PC-3 (cell line): ENCODE measurements at regions of chr4 and their contacts with region 1.

Region 1: DNA sequence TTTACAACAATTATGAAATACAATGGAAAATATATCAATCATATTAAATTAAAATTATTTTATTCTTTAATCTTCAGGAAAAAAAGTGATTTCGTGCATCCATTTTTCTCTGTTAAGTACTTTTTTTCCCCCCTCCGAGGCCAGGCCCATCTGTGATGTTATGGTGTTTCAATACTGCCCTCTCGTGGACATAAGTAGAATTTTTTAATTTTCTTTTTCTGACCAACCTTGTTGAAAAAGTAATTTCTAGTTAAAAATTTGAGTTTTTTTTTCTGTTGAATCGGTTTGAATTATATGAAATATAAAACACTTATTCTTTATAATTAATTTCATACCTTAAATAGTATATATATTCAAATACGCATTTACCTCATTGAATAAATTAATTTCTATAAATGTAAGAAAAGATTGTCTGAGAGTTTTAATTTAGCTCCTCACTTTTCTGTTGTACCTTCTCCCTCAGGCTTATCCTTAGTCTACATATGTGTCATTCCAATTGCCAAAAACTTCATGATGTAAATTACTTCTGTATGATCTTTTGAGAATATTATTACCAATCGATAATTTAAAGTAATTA is 175.8 kb upstream of the TECRL start:
- DNase-seq: peak; percentile 57
- ATAC-seq: no peak
- H3K4me3 ChIP-seq: no peak overlapping the region
- H3K27ac ChIP-seq: no peak overlapping the region
- H3K4me1 ChIP-seq: no peaks in the 10 kb centered on the region
- H3K27me3 ChIP-seq: no peaks in the 10 kb centered on the region
- CTCF ChIP-seq: peak; percentile 62

Region 2: DNA sequence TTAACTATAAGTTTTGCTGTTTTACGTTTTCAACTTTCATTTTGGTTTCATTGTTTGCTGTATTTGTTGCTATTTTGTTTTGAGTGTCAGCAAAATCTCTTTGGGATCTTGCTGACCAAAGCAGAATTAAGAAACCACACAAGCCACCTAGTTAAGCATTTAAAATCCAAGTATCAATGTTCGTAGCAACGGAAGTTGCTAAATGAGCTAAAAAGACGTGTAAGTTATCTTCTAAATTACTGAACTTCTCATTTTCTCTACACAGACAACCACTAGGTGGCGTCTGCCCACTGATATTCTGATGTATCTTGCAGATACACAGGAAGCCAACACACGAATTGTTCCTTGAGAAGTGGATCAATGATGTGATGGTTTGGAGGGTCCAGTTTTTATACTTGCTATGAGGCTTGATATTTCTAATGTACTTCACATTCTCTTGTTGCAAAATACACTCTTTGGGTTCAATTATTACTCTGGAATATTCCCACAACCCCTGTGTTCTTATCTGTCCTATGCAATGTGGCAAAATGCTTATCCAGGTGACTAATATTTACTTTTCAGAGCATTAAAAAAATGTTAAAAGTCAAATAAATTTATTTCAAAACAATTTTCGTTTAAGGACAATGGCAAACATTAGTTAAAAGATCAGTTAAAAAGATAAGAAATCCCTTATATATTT is 426.3 kb before region 1 on chr4:
- CTCF ChIA-PET with region 1: no interaction called
- POLR2A ChIA-PET with region 1: no interaction called
- intact Hi-C with region 1: loop called (anchors 2 kb)
- DNase-seq: peak; percentile 90
- ATAC-seq: peak; percentile 82
- H3K4me3 ChIP-seq: peak overlapping the region; percentile 61
- H3K27ac ChIP-seq: no peak overlapping the region
- H3K4me1 ChIP-seq: 0 out of 2 replicates have a peak, but pooled peaks cover 4% of the 10 kb centered on the region
- H3K27me3 ChIP-seq: no peaks in the 10 kb centered on the region
- CTCF ChIP-seq: peak; percentile 98

Region 3: GRCh38 chr4:64539234-64539849 is 45.7 kb before region 1 on chr4:
- CTCF ChIA-PET with region 1: no interaction called
- POLR2A ChIA-PET with region 1: no interaction called
- intact Hi-C with region 1: no loop called
- DNase-seq: peak; percentile 75
- ATAC-seq: peak; percentile 86
- H3K4me3 ChIP-seq: no peak overlapping the region
- H3K27ac ChIP-seq: no peak overlapping the region
- H3K4me1 ChIP-seq: no peaks in the 10 kb centered on the region
- H3K27me3 ChIP-seq: no peaks in the 10 kb centered on the region
- CTCF ChIP-seq: peak; percentile 86

Region 4: DNA sequence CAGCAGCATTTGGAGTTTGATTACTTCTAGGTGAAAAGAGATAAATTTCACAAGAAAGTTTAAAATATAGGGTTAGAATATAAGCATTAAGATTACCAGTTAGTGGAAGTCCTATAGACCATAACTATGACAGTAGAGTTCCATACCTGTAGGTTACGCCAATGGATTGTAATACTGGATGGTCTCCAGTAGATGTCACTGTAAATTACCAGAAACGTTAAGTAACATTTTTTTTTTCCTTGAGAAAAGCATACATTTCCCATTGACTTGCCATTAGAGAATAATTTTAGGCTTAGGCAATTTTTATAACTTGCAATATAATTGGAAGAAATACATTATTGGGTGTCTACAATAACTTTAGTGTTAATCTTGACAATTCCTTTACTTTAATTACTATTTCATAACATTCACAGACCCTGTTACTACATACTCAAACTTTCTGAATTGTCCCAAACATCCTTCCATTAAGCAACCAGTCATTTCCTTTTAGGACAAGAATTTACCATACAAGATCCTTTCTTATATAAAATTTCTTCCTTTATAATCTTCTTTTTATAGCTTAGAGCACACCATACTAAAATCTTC is 128.3 kb after region 1 on chr4:
- CTCF ChIA-PET with region 1: no interaction called
- POLR2A ChIA-PET with region 1: no interaction called
- intact Hi-C with region 1: no loop called
- DNase-seq: peak; percentile 81
- ATAC-seq: peak; percentile 52
- H3K4me3 ChIP-seq: no peak overlapping the region
- H3K27ac ChIP-seq: no peak overlapping the region
- H3K4me1 ChIP-seq: peaks cover 2% of the 10 kb centered on the region; the same call in 1 of the 2 replicates
- H3K27me3 ChIP-seq: no peaks in the 10 kb centered on the region
- CTCF ChIP-seq: peak; percentile 82